ENCODE measurements at regions of chr22 and their contacts with region 1.

Region 1: DNA sequence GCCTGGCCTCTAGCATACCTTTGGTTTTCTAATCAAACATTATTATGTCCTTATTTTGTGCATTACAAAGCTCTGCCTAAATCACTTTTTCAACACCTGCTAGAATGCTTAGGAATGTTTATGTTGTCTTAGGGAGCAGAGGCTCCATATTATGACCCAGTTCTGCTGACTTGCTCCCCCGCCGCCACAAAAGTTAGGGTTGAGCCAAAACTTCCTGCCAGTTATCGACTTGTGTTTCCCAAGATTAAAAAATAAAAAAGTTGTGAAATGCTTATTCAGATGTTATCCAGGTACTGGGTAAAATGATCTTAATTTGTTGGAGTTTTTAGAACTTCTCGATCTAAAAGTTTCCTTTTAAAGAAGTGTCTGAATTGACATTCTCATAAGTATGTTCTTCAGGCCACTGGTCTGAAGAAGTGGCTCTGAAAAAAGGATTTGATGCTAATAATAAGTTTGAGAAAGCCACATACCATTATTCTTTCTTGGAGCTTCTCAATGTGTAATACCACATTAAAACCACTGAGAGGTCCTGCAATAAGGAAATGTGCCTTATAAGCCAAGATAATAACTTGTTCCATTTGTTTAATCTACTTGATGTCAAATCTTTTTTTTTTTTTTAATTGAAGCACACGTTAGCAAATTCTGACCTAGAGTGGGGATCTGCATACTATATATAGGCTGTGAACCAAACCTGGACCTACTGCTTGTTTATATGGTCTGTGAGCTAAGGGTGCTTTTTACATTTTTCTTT is 2.2 kb downstream of the RNF185 start:
- DNase-seq: no peak
- ATAC-seq: no peak
- H3K4me3 ChIP-seq: no peak overlapping the region
- H3K27ac ChIP-seq: no peak overlapping the region
- H3K4me1 ChIP-seq: peaks cover 3% of the 10 kb centered on the region
- H3K27me3 ChIP-seq: no peaks in the 10 kb centered on the region
- CTCF ChIP-seq: no peak

Region 2: GRCh38 chr22:31080848-31081649 is 81.1 kb before region 1 on chr22 and contains the start of gene SMTN:
- CTCF ChIA-PET with region 1: no interaction called
- POLR2A ChIA-PET with region 1: no interaction called
- in situ Hi-C with region 1: no loop called
- intact Hi-C with region 1: no loop called
- DNase-seq: no peak
- ATAC-seq: peak; percentile 85
- H3K4me3 ChIP-seq: peak within 1 kb of the TSS; percentile 73 to 79
- H3K27ac ChIP-seq: peak within 1 kb of the TSS; percentile 76
- H3K4me1 ChIP-seq: peaks cover 16% of the 10 kb centered on the region
- H3K27me3 ChIP-seq: no peaks in the 10 kb centered on the region
- CTCF ChIP-seq: no peak
- total RNA-seq, gene SMTN: 71.7 TPM

Region 3: DNA sequence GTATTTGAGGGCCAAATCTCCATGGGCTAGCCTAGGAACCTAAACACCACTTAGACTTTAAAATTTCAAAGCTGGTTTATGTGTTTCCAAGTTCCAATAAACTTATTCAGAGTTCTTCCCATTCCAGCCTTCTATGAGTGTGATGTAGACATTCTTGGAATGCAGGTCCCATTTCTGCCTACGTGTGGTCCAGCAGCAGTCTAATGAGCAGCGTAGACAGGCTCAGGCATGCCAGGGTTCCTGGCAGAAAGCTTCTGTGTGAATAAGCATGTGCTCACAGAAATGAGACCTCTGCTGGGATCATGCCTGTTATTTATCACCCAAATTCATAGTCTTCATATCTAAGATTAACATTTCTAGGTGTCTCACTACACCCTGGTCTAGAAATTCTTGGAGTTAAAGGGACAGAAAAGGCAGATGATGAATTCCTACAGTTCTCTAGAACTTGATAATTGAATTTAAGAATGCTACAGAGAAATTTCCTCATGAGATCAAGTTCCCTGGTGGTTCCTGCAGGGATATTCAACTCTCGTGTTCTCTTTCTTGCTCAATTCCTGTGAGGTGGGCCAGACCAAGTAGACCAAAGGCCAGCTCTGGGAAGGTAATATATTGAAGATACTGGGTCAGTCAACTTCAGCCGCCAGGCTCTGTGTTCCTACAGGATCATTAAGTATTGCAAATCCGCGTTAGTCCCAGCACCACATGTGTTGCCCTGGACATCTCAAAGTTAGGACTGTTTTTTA is 15.4 kb after region 1 on chr22:
- CTCF ChIA-PET with region 1: no interaction called
- POLR2A ChIA-PET with region 1: interaction called, 15 read pairs
- in situ Hi-C with region 1: no loop called
- intact Hi-C with region 1: no loop called
- DNase-seq: no peak
- ATAC-seq: no peak
- H3K4me3 ChIP-seq: no peak overlapping the region
- H3K27ac ChIP-seq: no peak overlapping the region
- H3K4me1 ChIP-seq: peaks cover 7% of the 10 kb centered on the region; the same call in 1 of the 2 replicates
- H3K27me3 ChIP-seq: no peaks in the 10 kb centered on the region
- CTCF ChIP-seq: no peak

Measured in Panc1 (cell line).